CD8-positive, alpha-beta T cell (primary cell): ENCODE measurements at regions of chr6 and their contacts with region 1.

Region 1: GRCh38 chr6:106411643-106412200 is 51.2 kb downstream of the CRYBG1 start:
- DNase-seq: no peak
- ATAC-seq: no peak
- H3K4me3 ChIP-seq: no peak overlapping the region
- H3K4me3 Mint-ChIP-seq: no peak overlapping the region
- H3K27ac ChIP-seq: no peak overlapping the region
- H3K27ac Mint-ChIP-seq: no peak overlapping the region
- H3K4me1 ChIP-seq: no peaks in the 10 kb centered on the region
- H3K4me1 Mint-ChIP-seq: no peaks in the 10 kb centered on the region
- H3K27me3 ChIP-seq: no peaks in the 10 kb centered on the region
- H3K27me3 Mint-ChIP-seq: peaks cover 23% of the 10 kb centered on the region
- CTCF ChIP-seq: no peak

Region 2: DNA sequence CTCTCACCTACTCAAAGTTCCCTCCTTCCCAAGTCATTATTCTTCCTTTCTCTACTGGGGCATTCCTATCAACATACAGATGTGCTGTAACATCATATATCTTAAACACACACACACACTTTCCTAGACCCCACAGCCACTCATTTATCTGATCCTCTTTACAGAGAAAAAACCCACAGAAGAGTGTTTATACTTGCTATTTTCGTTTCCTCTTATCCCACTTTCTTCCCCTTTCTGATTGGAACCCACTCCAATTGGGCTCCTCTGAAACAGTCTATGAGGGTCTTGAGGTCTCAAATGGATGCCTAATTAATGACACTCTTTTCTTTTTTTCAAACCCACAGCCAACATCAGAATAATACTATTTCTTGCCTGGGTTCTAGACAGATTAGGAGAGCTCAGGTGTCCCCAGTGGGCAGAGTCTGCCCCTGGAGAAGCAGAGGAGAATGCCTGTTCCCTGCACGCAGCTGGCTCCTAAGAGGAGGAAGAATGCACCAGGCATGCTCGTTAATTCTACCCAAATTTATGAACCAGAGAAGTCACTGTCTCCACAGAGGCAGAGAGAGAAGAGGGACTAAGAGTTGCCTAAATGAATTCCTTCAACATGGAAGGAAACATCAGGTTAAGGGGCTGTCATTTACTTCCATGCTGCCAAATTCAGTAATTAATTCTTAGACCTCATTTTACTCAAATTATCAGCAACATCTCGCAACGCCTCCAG is 14.7 kb after region 1 on chr6:
- CTCF ChIA-PET with region 1: no interaction called
- POLR2A ChIA-PET with region 1: no interaction called
- intact Hi-C with region 1: loop called in 1 of 2 experiments (anchors 1 kb)
- DNase-seq: no peak
- ATAC-seq: no peak
- H3K4me3 ChIP-seq: no peak overlapping the region
- H3K4me3 Mint-ChIP-seq: no peak overlapping the region
- H3K27ac ChIP-seq: no peak overlapping the region
- H3K27ac Mint-ChIP-seq: no peak overlapping the region
- H3K4me1 ChIP-seq: no peaks in the 10 kb centered on the region
- H3K4me1 Mint-ChIP-seq: no peaks in the 10 kb centered on the region
- H3K27me3 ChIP-seq: no peaks in the 10 kb centered on the region
- H3K27me3 Mint-ChIP-seq: no peaks in the 10 kb centered on the region
- CTCF ChIP-seq: no peak